ENCODE measurements at regions of chr21 and their contacts with region 1.

Region 1: DNA sequence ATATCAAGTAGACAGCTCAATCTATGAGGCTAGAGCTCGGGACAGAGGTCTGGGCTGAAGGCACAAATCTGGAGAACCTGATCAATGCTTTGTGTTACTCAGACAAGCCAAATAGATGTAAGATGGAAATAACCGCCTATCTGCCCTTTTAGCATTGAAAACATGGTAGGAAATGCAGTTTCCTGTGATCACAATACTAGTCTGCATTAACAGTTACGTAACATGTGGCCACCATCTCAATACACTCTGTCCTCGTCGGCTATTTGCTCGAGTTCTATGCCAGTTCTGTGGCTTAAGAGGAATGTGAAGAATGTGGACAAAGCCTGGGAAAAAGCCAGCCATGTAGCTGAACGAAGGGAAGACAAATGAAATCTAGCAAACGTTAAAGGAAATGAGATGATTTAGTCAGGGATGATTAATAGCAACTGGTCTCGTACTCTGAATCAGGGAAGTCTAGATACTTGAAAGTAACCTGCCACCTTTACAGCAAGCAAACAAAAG is 73.3 kb downstream of the HSF2BP start:
- DNase-seq: peak; percentile 100
- H3K4me3 Mint-ChIP-seq: peak overlapping the region; percentile 49
- H3K27ac Mint-ChIP-seq: peak overlapping the region; percentile 96
- H3K4me1 Mint-ChIP-seq: peaks cover 38% of the 10 kb centered on the region
- H3K27me3 Mint-ChIP-seq: no peaks in the 10 kb centered on the region
- CTCF ChIP-seq: no peak

Region 2: GRCh38 chr21:43352568-43353281 is 233.2 kb before region 1 on chr21:
- CTCF ChIA-PET with region 1: no interaction called
- POLR2A ChIA-PET with region 1: no interaction called
- intact Hi-C with region 1: no loop called
- DNase-seq: peak; percentile 22
- H3K4me3 Mint-ChIP-seq: no peak overlapping the region
- H3K27ac Mint-ChIP-seq: no peak overlapping the region
- H3K4me1 Mint-ChIP-seq: peaks cover 4% of the 10 kb centered on the region
- H3K27me3 Mint-ChIP-seq: no peaks in the 10 kb centered on the region
- CTCF ChIP-seq: no peak

Region 3: GRCh38 chr21:43467785-43468184 is 118.2 kb before region 1 on chr21:
- CTCF ChIA-PET with region 1: no interaction called
- POLR2A ChIA-PET with region 1: no interaction called
- intact Hi-C with region 1: no loop called
- DNase-seq: no peak
- H3K4me3 Mint-ChIP-seq: no peak overlapping the region
- H3K27ac Mint-ChIP-seq: no peak overlapping the region
- H3K4me1 Mint-ChIP-seq: peaks cover 4% of the 10 kb centered on the region
- H3K27me3 Mint-ChIP-seq: no peaks in the 10 kb centered on the region
- CTCF ChIP-seq: no peak

Region 4: GRCh38 chr21:43600642-43601402 is 14.8 kb after region 1 on chr21:
- CTCF ChIA-PET with region 1: interaction called, 4 read pairs
- POLR2A ChIA-PET with region 1: interaction called, 53 read pairs
- intact Hi-C with region 1: no loop called
- DNase-seq: peak; percentile 70
- H3K4me3 Mint-ChIP-seq: peak overlapping the region; percentile 44
- H3K27ac Mint-ChIP-seq: no peak overlapping the region
- H3K4me1 Mint-ChIP-seq: peaks cover 39% of the 10 kb centered on the region
- H3K27me3 Mint-ChIP-seq: no peaks in the 10 kb centered on the region
- CTCF ChIP-seq: no peak

Region 5: DNA sequence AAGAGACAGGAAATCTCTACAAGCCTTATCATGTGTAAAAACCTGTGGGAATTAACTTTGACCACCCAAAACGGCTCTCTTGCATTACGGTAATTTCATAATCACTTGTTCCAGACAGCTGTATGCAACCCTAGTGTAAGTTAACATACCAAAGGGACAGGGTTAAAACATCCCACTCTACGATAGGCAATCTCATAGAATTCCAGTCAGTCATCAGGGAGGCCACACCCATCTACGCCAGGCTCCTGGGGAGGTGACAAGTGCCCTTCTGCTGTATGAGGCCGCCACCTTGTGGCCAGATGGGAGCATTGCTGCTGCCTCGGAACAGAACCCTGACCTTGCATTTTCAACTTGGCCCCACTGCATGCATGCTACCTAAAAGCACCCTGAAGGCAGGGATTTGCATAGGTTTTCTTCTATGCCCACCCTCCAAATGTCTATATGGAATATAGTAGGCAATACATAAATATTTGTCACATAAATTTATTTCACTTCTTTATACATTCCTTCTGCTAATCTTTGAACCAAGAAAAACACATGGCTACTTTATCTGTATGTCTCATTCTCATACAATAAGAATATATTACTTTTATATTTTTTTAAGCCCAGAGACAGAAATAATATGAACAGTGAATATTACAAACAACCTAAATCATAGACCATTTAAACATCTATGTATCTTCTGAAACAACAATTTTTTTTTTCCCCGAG is 60.7 kb after region 1 on chr21:
- CTCF ChIA-PET with region 1: interaction called, 6 read pairs
- POLR2A ChIA-PET with region 1: interaction called, 14 read pairs
- intact Hi-C with region 1: loop called (anchors 2 kb)
- DNase-seq: peak; percentile 96
- H3K4me3 Mint-ChIP-seq: peak overlapping the region; percentile 50
- H3K27ac Mint-ChIP-seq: peak overlapping the region; percentile 88
- H3K4me1 Mint-ChIP-seq: peaks cover 26% of the 10 kb centered on the region
- H3K27me3 Mint-ChIP-seq: no peaks in the 10 kb centered on the region
- CTCF ChIP-seq: peak; percentile 97

Region 6: DNA sequence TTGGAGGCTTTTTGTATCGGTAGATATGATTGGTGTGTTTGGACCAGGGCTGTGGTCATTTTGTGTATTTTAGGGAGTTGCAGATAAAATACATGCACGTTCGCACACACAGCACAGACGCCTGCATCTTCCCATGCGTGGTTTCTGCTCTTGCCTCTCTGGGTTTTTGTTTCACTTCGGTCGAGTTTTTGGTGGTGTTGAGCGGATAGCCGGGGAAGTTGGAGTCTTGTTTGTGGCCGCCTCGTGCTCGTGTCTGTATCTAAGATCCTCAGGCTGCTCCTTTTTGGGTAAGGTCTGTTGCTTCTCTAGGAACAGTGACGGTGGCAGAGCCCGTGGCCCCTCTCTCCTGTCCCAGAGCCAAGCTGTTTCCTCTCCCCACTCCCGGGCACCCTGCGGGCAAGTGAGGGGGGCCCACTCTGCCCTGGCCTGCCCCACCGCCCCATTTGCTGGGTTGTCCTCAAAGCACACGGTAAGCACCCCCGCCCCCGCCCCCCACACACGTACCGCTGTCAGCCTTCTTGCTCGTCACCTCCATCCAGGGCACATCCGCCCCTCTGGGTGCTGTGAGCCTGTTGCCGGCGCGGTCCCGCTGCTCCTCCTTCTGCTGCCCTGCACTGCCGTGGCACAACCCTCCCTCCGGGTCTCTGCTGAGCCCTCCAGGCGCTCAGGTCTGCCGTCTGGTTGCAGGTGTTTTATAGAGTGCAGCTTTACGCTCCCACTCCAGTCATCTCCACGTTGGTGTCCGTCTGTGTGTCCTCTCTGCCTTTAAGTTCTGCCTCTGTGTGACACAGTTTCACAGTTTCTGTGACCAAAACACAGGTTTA is 330.9 kb after region 1 on chr21:
- CTCF ChIA-PET with region 1: no interaction called
- POLR2A ChIA-PET with region 1: no interaction called
- intact Hi-C with region 1: no loop called
- DNase-seq: no peak
- H3K4me3 Mint-ChIP-seq: no peak overlapping the region
- H3K27ac Mint-ChIP-seq: no peak overlapping the region
- H3K4me1 Mint-ChIP-seq: peaks cover 24% of the 10 kb centered on the region
- H3K27me3 Mint-ChIP-seq: no peaks in the 10 kb centered on the region
- CTCF ChIP-seq: no peak